ENCODE measurements at regions of chr10 and their contacts with region 1.

Region 1: GRCh38 chr10:12419262-12419847 is 70.0 kb downstream of the CAMK1D start:
- DNase-seq: peak; percentile 89
- H3K4me3 Mint-ChIP-seq: peak overlapping the region; percentile 20
- H3K27ac Mint-ChIP-seq: peak overlapping the region; percentile 67
- H3K4me1 Mint-ChIP-seq: peaks cover 34% of the 10 kb centered on the region
- H3K27me3 Mint-ChIP-seq: no peaks in the 10 kb centered on the region

Region 2: DNA sequence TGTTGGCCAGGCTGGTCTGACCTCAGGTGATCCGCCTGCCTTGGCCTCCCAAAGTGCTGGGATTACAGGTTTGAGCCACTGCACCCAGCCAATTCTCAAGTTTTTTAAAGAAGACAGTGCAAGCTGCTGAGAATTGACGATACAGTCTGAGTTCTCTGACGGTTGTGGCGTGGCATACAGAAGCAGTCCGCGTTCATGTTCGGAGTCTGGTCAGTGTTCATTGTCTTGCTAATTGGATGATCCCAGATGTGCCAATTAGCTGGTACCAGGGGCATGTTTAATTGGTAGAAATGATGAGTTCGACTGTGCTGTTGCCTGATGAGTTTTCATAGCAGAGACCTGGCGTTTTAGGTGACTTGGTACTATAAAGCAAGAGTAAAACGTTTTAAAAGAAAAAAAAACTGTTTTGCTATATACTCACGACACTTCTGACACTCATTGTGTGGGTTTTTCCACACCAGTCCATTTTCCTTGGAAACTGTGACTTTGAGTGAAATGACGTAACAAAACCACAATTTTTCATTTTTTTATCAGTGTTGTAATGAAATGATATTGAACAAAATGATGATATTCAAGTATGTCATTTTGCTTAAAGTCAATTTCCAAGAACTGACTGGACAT is 37.7 kb before region 1 on chr10:
- CTCF ChIA-PET with region 1: no interaction called
- POLR2A ChIA-PET with region 1: interaction called, 6 read pairs
- intact Hi-C with region 1: loop called (anchors 1 kb)
- DNase-seq: no peak
- H3K4me3 Mint-ChIP-seq: peak overlapping the region; percentile 12
- H3K27ac Mint-ChIP-seq: peak overlapping the region; percentile 86
- H3K4me1 Mint-ChIP-seq: peaks cover 24% of the 10 kb centered on the region
- H3K27me3 Mint-ChIP-seq: no peaks in the 10 kb centered on the region

Region 3: DNA sequence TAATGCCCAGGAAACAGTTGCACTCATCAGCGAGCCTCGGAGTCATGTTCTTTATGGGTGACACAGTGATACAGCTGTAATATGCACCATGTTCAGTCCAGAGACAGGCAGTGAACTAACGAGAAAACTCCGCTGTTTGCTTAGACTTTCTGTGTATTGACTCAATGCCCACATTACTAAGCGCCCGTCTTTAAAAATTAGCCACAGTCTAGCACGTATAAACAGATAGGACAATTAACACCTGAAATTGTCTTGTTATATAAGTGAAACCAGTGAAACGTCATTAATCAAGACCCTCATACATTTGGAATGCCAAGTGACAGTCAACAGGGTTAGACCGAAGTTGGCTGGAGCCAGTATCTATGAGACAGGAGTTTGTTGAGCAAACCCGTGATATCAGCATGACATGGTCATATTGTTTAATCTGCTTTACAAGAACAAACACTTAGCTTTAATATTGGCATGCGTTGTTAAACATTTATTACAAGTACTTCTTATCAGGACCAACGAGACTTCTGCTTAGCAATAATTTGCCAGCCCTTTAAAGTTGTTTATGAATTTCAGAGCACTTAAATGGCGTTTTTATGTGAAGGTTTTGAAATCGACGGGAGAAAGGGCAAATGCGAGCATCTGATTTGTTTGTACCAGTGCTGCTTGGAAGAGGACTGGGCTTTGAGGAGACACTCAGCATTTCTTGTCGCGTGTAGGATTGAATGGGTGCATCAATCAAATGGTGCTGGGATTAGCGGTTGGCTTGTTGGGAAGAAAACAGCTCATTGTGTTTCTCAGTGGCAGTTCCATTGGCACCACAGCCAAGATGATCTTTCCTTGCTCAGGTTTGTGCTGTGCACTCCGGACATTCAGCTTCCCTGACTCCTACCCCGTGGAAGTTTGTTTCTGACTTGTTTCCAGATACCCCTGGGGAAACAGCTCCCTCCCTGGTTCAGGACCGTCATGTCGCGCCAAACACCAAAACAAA is 13.7 kb before region 1 on chr10:
- CTCF ChIA-PET with region 1: interaction called, 4 read pairs
- POLR2A ChIA-PET with region 1: interaction called, 5 read pairs
- intact Hi-C with region 1: loop called (anchors 1 kb)
- DNase-seq: no peak
- H3K4me3 Mint-ChIP-seq: no peak overlapping the region
- H3K27ac Mint-ChIP-seq: no peak overlapping the region
- H3K4me1 Mint-ChIP-seq: peaks cover 34% of the 10 kb centered on the region
- H3K27me3 Mint-ChIP-seq: no peaks in the 10 kb centered on the region

Region 4: GRCh38 chr10:12588120-12588860 is 168.9 kb after region 1 on chr10:
- CTCF ChIA-PET with region 1: no interaction called
- POLR2A ChIA-PET with region 1: no interaction called
- intact Hi-C with region 1: no loop called
- DNase-seq: peak; percentile 43
- H3K4me3 Mint-ChIP-seq: peak overlapping the region; percentile 62
- H3K27ac Mint-ChIP-seq: no peak overlapping the region
- H3K4me1 Mint-ChIP-seq: peaks cover 57% of the 10 kb centered on the region
- H3K27me3 Mint-ChIP-seq: no peaks in the 10 kb centered on the region